ENCODE measurements at regions of chr18 and their contacts with region 1.

Region 1: GRCh38 chr18:5237723-5238370 is 40.8 kb upstream of the AKAIN1 start:
- DNase-seq: peak; percentile 38 to 92
- H3K4me3 ChIP-seq: peak overlapping the region; percentile 77 to 94 (median 91)
- H3K27ac ChIP-seq: peak overlapping the region; percentile 97
- H3K4me1 ChIP-seq: peaks cover 0 to 5% (median 3%) of the 10 kb centered on the region in 4 experiments; a peak in 4 of 7 replicates
- H3K27me3 ChIP-seq: no peaks in the 10 kb centered on the region; a peak in 1 of 7 replicates
- CTCF ChIP-seq: peak; percentile 1 to 7 (median 4); a peak in 2 of 4 replicates
- EP300 ChIP-seq: 0 out of 3 replicates have a peak, but pooled peaks of 1 of the 2 experiments have one; percentile 15
- POLR2A ChIP-seq: peak; percentile 15 to 76
- RAD21 ChIP-seq: 0 out of 4 replicates have a peak, but pooled peaks of 1 of the 2 experiments have one; percentile 17

Region 2: GRCh38 chr18:5175378-5175777 is 62.5 kb before region 1 on chr18:
- CTCF ChIA-PET with region 1: no interaction called
- POLR2A ChIA-PET with region 1: no interaction called
- DNase-seq: no peak
- H3K4me3 ChIP-seq: no peak overlapping the region
- H3K27ac ChIP-seq: no peak overlapping the region
- H3K4me1 ChIP-seq: no peaks in the 10 kb centered on the region
- H3K27me3 ChIP-seq: no peaks in the 10 kb centered on the region
- CTCF ChIP-seq: no peak
- EP300 ChIP-seq: no peak
- POLR2A ChIP-seq: no peak
- RAD21 ChIP-seq: no peak

Region 3: GRCh38 chr18:5253910-5254309 is 16.1 kb after region 1 on chr18:
- CTCF ChIA-PET with region 1: interaction called, 3 read pairs
- POLR2A ChIA-PET with region 1: interaction called, 12 read pairs
- DNase-seq: no peak
- H3K4me3 ChIP-seq: no peak overlapping the region
- H3K27ac ChIP-seq: no peak overlapping the region
- H3K4me1 ChIP-seq: no peaks in the 10 kb centered on the region
- H3K27me3 ChIP-seq: no peaks in the 10 kb centered on the region
- CTCF ChIP-seq: no peak
- EP300 ChIP-seq: no peak
- POLR2A ChIP-seq: no peak
- RAD21 ChIP-seq: no peak

Region 4: DNA sequence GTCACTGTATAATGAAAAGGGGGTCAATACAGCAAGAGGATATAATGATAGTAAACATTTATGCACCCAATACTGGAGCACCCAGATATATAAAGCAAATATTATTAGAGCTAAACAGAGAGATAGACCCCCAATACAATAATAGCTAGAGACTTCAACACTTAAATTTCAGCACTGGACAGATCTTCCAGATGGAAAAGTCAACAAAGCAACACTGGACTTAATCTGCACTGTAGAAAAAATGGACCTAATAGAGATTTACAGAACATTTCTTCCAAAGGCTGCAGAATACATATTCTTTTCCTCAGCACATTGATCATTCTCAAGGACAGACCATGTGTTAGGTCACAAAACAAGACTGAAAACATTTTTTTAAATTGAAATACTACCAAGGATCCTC is 31.0 kb after region 1 on chr18:
- CTCF ChIA-PET with region 1: no interaction called
- POLR2A ChIA-PET with region 1: no interaction called
- DNase-seq: no peak
- H3K4me3 ChIP-seq: no peak overlapping the region
- H3K27ac ChIP-seq: no peak overlapping the region
- H3K4me1 ChIP-seq: no peaks in the 10 kb centered on the region
- H3K27me3 ChIP-seq: no peaks in the 10 kb centered on the region
- CTCF ChIP-seq: no peak
- EP300 ChIP-seq: no peak
- POLR2A ChIP-seq: no peak
- RAD21 ChIP-seq: no peak

Region 5: GRCh38 chr18:5295981-5296705 is 58.3 kb after region 1 on chr18:
- CTCF ChIA-PET with region 1: interaction called, 3 read pairs
- POLR2A ChIA-PET with region 1: interaction called, 21 read pairs
- DNase-seq: peak; percentile 80 to 90
- H3K4me3 ChIP-seq: peak overlapping the region; percentile 73 to 84 (median 78)
- H3K27ac ChIP-seq: peak overlapping the region; percentile 51; the same call in 1 of the 2 replicates
- H3K4me1 ChIP-seq: peaks cover 4 to 9% (median 5%) of the 10 kb centered on the region in 4 experiments
- H3K27me3 ChIP-seq: peaks cover 0 to 16% (median 9%) of the 10 kb centered on the region in 4 experiments; a peak in 6 of 7 replicates
- CTCF ChIP-seq: no peak
- EP300 ChIP-seq: 0 out of 3 replicates have a peak, but pooled peaks of 1 of the 2 experiments have one; percentile 48
- POLR2A ChIP-seq: peak in 1 of 2 experiments; percentile 72; a peak in 1 of 3 replicates
- RAD21 ChIP-seq: peak in 1 of 2 experiments; percentile 2; a peak in 1 of 4 replicates

Region 6: DNA sequence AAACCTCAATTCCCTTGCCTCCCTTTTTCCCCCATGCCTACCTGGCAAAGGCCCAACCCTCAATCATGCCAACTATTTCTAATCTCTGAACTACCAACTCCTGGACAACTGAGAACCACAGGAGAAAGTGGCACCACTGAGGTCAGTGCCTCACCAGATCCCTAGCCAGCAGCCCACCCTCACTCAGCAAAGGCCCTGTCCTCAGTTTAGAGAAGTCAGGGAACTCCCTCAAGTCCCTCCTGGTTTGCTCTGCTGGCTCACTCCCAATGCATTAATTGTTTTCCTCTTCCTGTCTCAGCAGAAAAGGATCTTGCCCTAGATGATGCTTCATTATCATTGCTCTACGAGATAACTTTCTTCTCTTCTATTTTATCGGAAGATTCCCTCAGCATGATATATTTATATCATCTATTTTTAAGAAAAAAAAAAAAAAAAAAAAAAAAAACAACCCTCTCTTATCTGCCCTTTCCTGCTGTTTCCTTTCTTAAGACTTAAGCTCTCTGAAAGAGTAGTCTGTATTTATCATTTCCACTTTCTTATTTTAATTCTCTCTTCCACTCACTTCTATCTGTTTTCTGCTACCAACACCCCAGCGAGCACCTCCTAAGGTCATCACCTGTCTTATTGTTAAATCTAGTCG is 80.3 kb after region 1 on chr18:
- CTCF ChIA-PET with region 1: no interaction called
- POLR2A ChIA-PET with region 1: no interaction called
- DNase-seq: no peak
- H3K4me3 ChIP-seq: no peak overlapping the region
- H3K27ac ChIP-seq: no peak overlapping the region
- H3K4me1 ChIP-seq: no peaks in the 10 kb centered on the region
- H3K27me3 ChIP-seq: no peaks in the 10 kb centered on the region
- CTCF ChIP-seq: no peak
- EP300 ChIP-seq: no peak
- POLR2A ChIP-seq: no peak
- RAD21 ChIP-seq: no peak

Measured in H1 (cell line).